ENCODE measurements at regions of chr10 and their contacts with region 1.

Region 1: DNA sequence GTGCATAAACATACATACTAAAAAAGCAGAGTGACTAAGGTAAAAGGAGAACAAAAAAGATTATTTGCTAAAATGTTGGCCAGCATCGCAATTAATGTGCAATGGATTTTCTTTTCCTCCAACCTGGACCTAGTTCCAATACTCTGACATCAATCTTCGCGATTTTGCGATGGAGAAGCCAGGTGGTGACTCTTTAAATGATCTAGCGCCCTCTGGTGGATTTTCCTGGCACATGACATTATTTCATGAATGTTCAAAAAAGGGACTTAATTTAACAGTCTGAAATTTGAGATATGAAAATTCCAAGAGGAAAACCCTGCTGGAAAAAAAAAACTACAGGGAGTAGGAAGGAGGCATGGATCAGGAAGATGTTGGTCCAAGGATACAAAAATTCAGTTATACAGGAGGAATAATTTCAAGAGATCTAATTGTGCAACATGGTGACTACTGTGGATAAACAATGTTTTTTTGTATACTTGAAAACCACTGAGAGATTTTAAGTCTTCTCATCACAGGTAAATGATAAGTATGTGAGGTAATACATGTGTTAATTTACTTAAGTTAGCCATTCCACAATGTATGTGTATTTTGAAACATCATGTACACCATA is 4.3 kb upstream of the KCNMA1 start:
- DNase-seq: peak in 1 of 2 donors; percentile 59
- ATAC-seq: peak; percentile 55
- H3K4me3 ChIP-seq: no peak overlapping the region
- H3K27ac ChIP-seq: no peak overlapping the region
- H3K4me1 ChIP-seq: peaks cover 0 to 5% of the 10 kb centered on the region in 2 donors
- H3K27me3 ChIP-seq: no peaks in the 10 kb centered on the region

Region 2: GRCh38 chr10:77173615-77174461 is 468.1 kb before region 1 on chr10:
- intact Hi-C with region 1: loop called (anchors 2 kb)
- DNase-seq: peak; percentile 76 to 86
- ATAC-seq: peak; percentile 88
- H3K4me3 ChIP-seq: no peak overlapping the region
- H3K27ac ChIP-seq: no peak overlapping the region
- H3K4me1 ChIP-seq: peaks cover 0 to 2% of the 10 kb centered on the region in 2 donors
- H3K27me3 ChIP-seq: no peaks in the 10 kb centered on the region

Region 3: GRCh38 chr10:77230194-77230593 is 411.7 kb before region 1 on chr10:
- intact Hi-C with region 1: no loop called
- DNase-seq: no peak
- ATAC-seq: no peak
- H3K4me3 ChIP-seq: no peak overlapping the region
- H3K27ac ChIP-seq: no peak overlapping the region
- H3K4me1 ChIP-seq: peaks cover 3 to 4% of the 10 kb centered on the region in 2 donors
- H3K27me3 ChIP-seq: no peaks in the 10 kb centered on the region

Region 4: GRCh38 chr10:77391605-77392235 is 250.2 kb before region 1 on chr10:
- intact Hi-C with region 1: loop called (anchors 5 kb)
- DNase-seq: peak; percentile 91 to 94
- ATAC-seq: peak; percentile 75
- H3K4me3 ChIP-seq: no peak overlapping the region
- H3K27ac ChIP-seq: peak overlapping the region; percentile 94 to 100
- H3K4me1 ChIP-seq: peaks cover 7 to 31% of the 10 kb centered on the region in 2 donors
- H3K27me3 ChIP-seq: no peaks in the 10 kb centered on the region

Region 5: GRCh38 chr10:77501152-77501845 is 140.6 kb before region 1 on chr10:
- intact Hi-C with region 1: loop called in 1 of 2 experiments (anchors 10 kb)
- DNase-seq: peak; percentile 67 to 87
- ATAC-seq: peak; percentile 72
- H3K4me3 ChIP-seq: no peak overlapping the region
- H3K27ac ChIP-seq: no peak overlapping the region
- H3K4me1 ChIP-seq: peaks cover 10 to 11% of the 10 kb centered on the region in 2 donors
- H3K27me3 ChIP-seq: no peaks in the 10 kb centered on the region

Region 6: DNA sequence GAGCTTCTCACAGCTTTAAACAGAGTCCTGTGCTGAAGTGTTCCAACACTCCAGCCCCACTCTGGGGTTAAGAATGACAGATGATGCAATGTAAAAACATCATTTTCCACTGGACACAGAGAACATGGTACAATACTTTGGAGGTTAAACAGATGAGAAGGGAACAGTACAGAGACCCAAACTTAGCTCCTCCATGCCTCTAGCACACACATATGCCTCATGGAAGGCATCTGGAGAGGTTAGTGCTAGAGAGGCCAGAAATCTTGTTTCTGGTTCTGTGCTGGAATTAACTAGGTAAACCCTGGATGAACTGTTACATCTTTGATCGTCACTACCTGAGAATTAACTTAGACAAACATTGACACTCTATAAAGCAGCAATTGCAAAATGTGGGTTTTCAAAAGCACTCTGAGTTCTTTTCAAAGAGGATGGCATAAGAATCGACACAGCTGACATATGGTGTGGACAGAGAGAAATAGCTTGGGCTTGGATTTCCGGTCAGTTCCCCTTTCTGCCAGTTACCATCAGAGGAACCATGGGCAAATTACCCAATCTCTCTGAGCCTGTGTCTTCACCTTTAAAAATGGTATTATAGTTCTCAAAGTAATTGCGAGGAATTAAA is 86.2 kb before region 1 on chr10:
- intact Hi-C with region 1: loop called in 1 of 2 experiments (anchors 10 kb)
- DNase-seq: no peak
- ATAC-seq: peak; percentile 71
- H3K4me3 ChIP-seq: no peak overlapping the region
- H3K27ac ChIP-seq: peak overlapping the region; percentile 72 to 85
- H3K4me1 ChIP-seq: peaks cover 1 to 5% of the 10 kb centered on the region in 2 donors
- H3K27me3 ChIP-seq: no peaks in the 10 kb centered on the region

Region 7: DNA sequence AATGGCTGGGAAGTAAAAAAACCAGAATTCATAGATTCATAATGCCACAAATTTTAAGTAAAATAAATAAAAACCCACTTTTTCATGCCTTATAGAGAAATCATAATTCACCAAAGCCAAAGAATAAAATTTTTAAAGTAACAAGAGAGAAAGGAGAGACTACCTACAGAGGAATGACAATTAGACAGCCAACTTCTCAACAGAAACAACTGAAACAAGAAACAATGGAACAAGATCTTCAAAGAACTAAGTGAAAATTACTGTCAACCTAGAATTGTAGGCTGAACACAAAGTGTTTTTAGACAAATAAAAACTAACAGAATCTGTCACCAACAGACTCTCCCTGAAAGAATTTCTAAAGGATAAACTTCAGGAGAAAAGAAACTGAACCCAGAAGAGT is 11.3 kb after region 1 on chr10:
- intact Hi-C with region 1: no loop called
- DNase-seq: no peak
- ATAC-seq: no peak
- H3K4me3 ChIP-seq: no peak overlapping the region
- H3K27ac ChIP-seq: no peak overlapping the region
- H3K4me1 ChIP-seq: no peaks in the 10 kb centered on the region
- H3K27me3 ChIP-seq: no peaks in the 10 kb centered on the region